BJ (cell line): ENCODE measurements at regions of chr19 and their contacts with region 1.

Region 1: DNA sequence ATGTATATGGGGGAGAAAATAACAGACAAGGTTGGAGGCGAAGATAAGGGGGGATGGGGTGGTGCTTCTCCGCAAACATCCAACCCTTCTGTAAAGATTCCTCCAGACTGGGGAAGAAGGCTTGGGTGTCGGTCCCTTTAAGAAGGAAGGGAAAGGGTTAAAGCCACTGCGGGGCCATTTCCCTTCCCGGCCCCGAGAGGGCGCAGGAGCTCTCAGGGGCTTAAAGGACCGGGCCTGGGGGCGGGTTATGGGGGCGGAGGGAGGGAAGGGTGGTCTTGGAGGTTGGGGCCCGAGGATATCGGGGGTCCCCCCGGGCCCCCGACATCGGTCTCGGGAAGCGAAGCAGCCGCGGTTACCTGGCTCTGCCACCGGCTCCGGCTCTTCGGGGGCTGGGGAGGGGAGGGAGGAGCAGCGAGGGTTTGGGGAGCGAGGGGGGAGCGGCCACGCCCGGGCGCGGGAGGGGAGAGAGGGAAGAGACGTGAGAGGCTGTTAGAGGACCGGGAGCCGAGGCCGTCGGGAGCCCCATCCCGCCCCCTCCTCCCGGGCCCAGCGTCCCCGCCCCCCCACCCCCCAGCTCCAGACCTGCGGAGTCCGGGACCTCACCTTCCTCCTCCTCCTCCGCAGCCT is 2.8 kb downstream of the TNNT1 start:
- DNase-seq: no peak
- H3K4me3 ChIP-seq: peak overlapping the region; percentile 48
- H3K27me3 ChIP-seq: peaks cover 6% of the 10 kb centered on the region
- CTCF ChIP-seq: peak; percentile 89

Region 2: GRCh38 chr19:55117636-55118391 is 28.4 kb before region 1 on chr19 and contains the start of gene PPP1R12C:
- CTCF ChIA-PET with region 1: interaction called, 12 read pairs
- POLR2A ChIA-PET with region 1: no interaction called
- DNase-seq: peak; percentile 94
- H3K4me3 ChIP-seq: peak within 1 kb of the TSS; percentile 97
- H3K27me3 ChIP-seq: no peaks in the 10 kb centered on the region; the same call in 1 of the 2 replicates
- CTCF ChIP-seq: no peak
- polyA plus RNA-seq, gene PPP1R12C: 36.0 and 50.8 TPM in 2 replicates

Region 3: GRCh38 chr19:55166530-55167268 is 20.5 kb after region 1 on chr19 and contains the start of gene DNAAF3:
- CTCF ChIA-PET with region 1: interaction called, 14 read pairs
- POLR2A ChIA-PET with region 1: no interaction called
- DNase-seq: peak; percentile 84
- H3K4me3 ChIP-seq: peak within 1 kb of the TSS; percentile 56
- H3K27me3 ChIP-seq: peaks cover 9% of the 10 kb centered on the region; the same call in 1 of the 2 replicates
- CTCF ChIP-seq: no peak
- polyA plus RNA-seq, gene DNAAF3: 0.39 and 0.51 TPM in 2 replicates

Region 4: GRCh38 chr19:55494172-55494761 is 348.1 kb after region 1 on chr19:
- CTCF ChIA-PET with region 1: interaction called, 5 read pairs
- POLR2A ChIA-PET with region 1: interaction called, 10 read pairs
- DNase-seq: no peak
- H3K4me3 ChIP-seq: peak overlapping the region; percentile 39
- H3K27me3 ChIP-seq: no peaks in the 10 kb centered on the region
- CTCF ChIP-seq: no peak

Region 5: GRCh38 chr19:55632463-55632834 is 486.3 kb after region 1 on chr19:
- CTCF ChIA-PET with region 1: interaction called, 10 read pairs
- POLR2A ChIA-PET with region 1: no interaction called
- DNase-seq: no peak
- H3K4me3 ChIP-seq: no peak overlapping the region
- H3K27me3 ChIP-seq: no peaks in the 10 kb centered on the region
- CTCF ChIP-seq: peak; percentile 83